Adrenal gland (tissue), 19 donors: ENCODE measurements at regions of chr12 and their contacts with region 1.

Region 1: DNA sequence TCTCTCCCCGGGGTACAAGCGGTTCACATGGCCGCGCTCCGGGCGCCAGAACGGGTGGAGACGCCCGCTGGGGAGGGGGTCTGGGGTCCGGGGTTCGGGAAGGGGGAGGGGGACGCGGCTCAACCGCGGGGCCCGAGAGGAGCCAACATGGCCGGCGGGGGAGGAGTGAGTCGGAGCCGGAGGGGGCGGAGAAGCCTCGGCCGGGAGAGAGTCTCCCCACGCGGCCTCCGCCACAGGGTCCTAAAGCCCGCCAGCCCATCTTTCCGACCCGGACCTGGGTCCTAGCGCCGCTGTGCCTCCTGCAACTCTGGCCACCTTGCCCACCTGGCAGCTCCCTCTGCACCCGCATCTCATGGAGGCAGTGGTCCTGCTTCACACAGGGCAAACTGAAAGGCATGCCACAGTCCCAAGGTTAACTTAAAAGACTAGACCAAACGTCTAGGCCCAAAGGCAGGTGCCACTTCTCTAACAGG is at the start of gene BAZ2A:
- DNase-seq: peak; percentile 80 to 93 (median 90)
- H3K4me3 ChIP-seq: peak within 1 kb of the TSS; percentile 88 to 99 (median 98)
- H3K27ac ChIP-seq: peak within 1 kb of the TSS; percentile 87 to 94 (median 91)
- H3K4me1 ChIP-seq: peaks cover 41 to 76% of the 10 kb centered on the region in 2 donors
- H3K27me3 ChIP-seq: no peaks in the 10 kb centered on the region
- CTCF ChIP-seq: no peak
- POLR2A ChIP-seq: no peak
- total RNA-seq, gene BAZ2A: 25.5 to 96.0 (median 79.7) TPM

Region 2: GRCh38 chr12:56518570-56518969 is 111.6 kb before region 1 on chr12:
- intact Hi-C with region 1: loop called (anchors 10 kb)
- DNase-seq: no peak
- H3K4me3 ChIP-seq: no peak overlapping the region
- H3K27ac ChIP-seq: no peak overlapping the region
- H3K4me1 ChIP-seq: peaks cover 10 to 32% of the 10 kb centered on the region in 2 donors
- H3K27me3 ChIP-seq: no peaks in the 10 kb centered on the region
- CTCF ChIP-seq: no peak
- POLR2A ChIP-seq: no peak

Region 3: GRCh38 chr12:56596815-56597214 is 33.4 kb before region 1 on chr12:
- intact Hi-C with region 1: loop called in 1 of 2 experiments (anchors 5 kb)
- DNase-seq: no peak
- H3K4me3 ChIP-seq: no peak overlapping the region
- H3K27ac ChIP-seq: no peak overlapping the region
- H3K4me1 ChIP-seq: peaks cover 0 to 10% of the 10 kb centered on the region in 2 donors
- H3K27me3 ChIP-seq: no peaks in the 10 kb centered on the region
- CTCF ChIP-seq: no peak
- POLR2A ChIP-seq: no peak

Region 4: DNA sequence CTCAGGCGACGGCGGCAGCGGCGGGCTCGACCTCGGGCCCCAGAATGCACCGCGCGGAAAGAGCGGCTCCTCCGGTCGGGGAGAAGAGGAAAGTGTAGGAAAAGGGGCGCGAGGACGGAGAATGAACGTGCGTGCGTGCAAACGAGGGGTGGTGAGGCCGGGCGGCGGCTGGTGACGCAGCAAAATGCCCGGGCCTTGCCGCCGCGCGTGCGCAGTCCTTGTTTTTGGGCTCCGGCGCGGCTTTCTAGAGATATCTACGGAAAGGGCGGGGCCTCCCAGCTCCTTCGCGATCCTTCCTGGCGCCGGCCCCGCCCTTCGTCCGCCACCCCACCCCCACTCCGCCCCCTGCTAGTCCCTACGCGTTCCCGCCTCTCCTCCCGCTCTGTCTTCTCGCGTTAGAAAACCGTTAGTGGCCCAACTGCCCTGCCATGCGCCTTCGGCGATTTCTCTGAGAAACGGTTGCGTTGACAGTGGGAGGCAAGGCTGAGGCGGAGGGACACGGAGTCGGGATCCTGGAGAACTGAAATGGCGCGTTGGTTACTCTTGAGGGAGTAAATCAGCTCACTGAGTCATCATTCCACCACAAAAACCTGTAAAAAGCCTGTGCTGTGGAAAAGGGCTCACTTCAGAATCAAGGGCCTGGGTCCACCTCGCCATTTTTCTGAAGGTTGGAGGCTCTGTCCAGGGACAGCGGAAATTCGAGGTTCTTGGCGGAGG is 58.1 kb after region 1 on chr12 and contains the start of gene PTGES3:
- intact Hi-C with region 1: loop called in 1 of 2 experiments (anchors 5 kb)
- DNase-seq: peak; percentile 98 to 99 (median 99)
- H3K4me3 ChIP-seq: peak within 1 kb of the TSS; percentile 11 to 95 (median 90)
- H3K27ac ChIP-seq: peak within 1 kb of the TSS; percentile 92 to 100 (median 99)
- H3K4me1 ChIP-seq: peaks cover 23 to 32% of the 10 kb centered on the region in 2 donors
- H3K27me3 ChIP-seq: no peaks in the 10 kb centered on the region
- CTCF ChIP-seq: peak in 1 of 6 experiments; percentile 13
- POLR2A ChIP-seq: peak; percentile 91 to 95
- total RNA-seq, gene PTGES3: 47.3 to 171 (median 106) TPM